Calu3 (cell line): ENCODE measurements at regions of chr1 and their contacts with region 1.

Region 1: DNA sequence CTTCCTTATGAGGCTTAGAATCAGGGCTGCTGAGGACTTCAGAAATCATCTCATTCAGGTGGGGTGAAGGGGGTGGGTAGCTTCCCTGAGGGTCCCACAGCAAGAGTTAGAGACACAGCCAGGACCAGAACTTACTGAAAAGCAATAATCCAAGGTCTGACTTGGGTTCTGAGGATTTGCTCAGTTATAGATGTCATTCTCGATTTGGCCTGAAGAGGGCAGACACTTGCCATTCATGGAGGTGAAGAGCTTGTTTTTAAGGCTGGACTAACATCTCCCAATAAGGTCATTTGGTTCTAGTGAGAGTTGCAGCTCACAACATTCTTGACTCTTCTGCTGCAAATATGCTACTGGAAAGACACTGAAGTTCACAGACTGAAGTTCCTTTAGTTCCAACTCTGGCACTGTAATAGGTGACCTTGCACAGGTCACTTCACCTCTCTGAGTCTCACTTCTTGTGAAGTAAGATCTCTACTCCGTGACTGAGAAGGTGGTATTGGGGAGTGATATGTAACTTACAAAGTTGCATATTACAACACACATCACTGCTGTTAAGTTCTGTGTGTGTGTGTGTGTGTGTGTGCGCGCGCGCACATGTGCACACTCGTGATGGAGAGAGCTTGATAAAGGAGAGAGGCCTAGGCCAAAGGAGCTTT is 69.8 kb upstream of the DIRAS3 start:
- DNase-seq: peak; percentile 66
- H3K4me3 Mint-ChIP-seq: no peak overlapping the region
- H3K27ac Mint-ChIP-seq: no peak overlapping the region
- H3K4me1 Mint-ChIP-seq: peaks cover 9% of the 10 kb centered on the region
- H3K27me3 Mint-ChIP-seq: no peaks in the 10 kb centered on the region
- CTCF ChIP-seq: peak; percentile 71

Region 2: GRCh38 chr1:68101829-68102228 is 18.4 kb before region 1 on chr1:
- CTCF ChIA-PET with region 1: no interaction called
- intact Hi-C with region 1: no loop called
- DNase-seq: no peak
- H3K4me3 Mint-ChIP-seq: no peak overlapping the region
- H3K27ac Mint-ChIP-seq: no peak overlapping the region
- H3K4me1 Mint-ChIP-seq: no peaks in the 10 kb centered on the region
- H3K27me3 Mint-ChIP-seq: no peaks in the 10 kb centered on the region
- CTCF ChIP-seq: no peak

Region 3: DNA sequence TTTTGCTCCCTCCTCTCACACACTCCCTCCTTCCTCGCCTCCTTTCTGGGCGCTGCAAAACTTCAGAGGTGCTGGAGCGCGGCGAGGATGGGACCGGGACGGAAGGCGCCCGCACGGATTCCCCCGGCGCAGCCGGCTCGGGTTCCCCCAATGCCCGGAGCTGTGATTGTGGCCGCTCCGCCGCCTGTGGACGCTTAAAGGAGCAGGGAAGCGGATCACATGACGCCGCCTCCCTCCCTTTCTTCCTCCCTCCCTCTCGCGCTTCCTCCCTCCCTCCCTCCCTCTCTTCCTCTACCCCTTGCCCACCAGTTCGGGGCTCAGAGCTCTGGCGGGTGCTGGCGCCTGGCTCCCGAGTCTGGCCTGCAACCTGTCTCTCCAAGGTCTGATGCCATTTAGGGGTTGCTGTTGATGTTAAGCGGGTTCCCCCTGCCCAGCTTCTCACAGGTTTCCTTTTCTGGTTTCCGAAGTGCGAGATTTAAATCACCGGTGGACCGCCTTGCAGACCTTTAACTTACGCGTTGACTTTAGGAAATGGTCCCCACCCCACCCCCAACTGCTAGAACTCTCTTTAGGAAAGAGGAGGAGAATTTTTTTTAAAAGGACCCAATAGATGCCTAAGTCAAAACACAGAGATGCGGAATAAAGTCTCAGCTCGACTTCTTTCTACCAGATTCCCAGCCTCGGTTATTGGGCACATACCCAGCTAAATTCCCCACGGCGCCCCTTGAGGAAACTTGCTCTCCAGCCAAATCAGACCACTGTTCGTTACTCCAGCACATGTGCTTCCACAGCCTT is 112.3 kb after region 1 on chr1 and contains the start of gene WLS:
- CTCF ChIA-PET with region 1: interaction called, 10 read pairs
- intact Hi-C with region 1: loop called (anchors 2 kb)
- DNase-seq: peak; percentile 65
- H3K4me3 Mint-ChIP-seq: peak within 1 kb of the TSS; percentile 96
- H3K27ac Mint-ChIP-seq: peak within 1 kb of the TSS; percentile 17
- H3K4me1 Mint-ChIP-seq: peaks cover 19% of the 10 kb centered on the region
- H3K27me3 Mint-ChIP-seq: no peaks in the 10 kb centered on the region
- CTCF ChIP-seq: no peak
- total RNA-seq, gene WLS: 50.9 and 57.3 TPM in 2 replicates

Region 4: DNA sequence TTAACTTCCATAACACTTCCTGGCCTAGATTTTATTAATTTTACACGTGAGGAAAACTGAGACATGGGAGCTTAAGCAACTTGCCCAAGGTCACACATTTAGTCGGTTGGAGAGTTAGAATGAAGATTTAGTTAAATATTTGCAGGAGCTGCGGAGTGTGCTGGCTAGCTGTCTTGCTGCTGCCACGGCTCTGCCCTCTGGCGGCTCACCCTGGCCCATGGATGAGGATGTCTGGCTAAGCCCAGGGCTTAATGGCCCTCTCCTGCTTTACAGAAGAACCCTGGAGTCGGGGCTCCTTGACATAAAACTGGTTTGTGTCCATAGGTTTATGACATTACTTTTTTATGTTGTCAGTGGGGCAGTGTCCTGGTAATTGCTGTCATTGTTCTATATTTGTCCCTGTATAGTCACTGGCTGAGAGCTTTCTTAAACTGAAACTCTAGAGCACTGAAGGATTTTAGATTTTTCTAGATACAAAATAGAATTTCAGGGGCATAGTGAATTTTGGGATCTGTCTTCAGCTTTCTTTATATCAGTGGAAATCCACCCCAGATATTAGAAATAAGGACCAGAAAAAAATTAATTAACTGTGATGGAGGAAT is 200.9 kb after region 1 on chr1:
- CTCF ChIA-PET with region 1: interaction called, 87 read pairs
- intact Hi-C with region 1: loop called (anchors 1 kb)
- DNase-seq: peak; percentile 84
- H3K4me3 Mint-ChIP-seq: no peak overlapping the region
- H3K27ac Mint-ChIP-seq: no peak overlapping the region
- H3K4me1 Mint-ChIP-seq: peaks cover 5% of the 10 kb centered on the region
- H3K27me3 Mint-ChIP-seq: no peaks in the 10 kb centered on the region
- CTCF ChIP-seq: peak; percentile 74

Region 5: GRCh38 chr1:68346188-68346808 is 226.0 kb after region 1 on chr1:
- CTCF ChIA-PET with region 1: interaction called, 12 read pairs
- intact Hi-C with region 1: loop called (anchors 1 kb)
- DNase-seq: no peak
- H3K4me3 Mint-ChIP-seq: no peak overlapping the region
- H3K27ac Mint-ChIP-seq: peak overlapping the region; percentile 30
- H3K4me1 Mint-ChIP-seq: peaks cover 12% of the 10 kb centered on the region
- H3K27me3 Mint-ChIP-seq: no peaks in the 10 kb centered on the region
- CTCF ChIP-seq: peak; percentile 25

Region 6: DNA sequence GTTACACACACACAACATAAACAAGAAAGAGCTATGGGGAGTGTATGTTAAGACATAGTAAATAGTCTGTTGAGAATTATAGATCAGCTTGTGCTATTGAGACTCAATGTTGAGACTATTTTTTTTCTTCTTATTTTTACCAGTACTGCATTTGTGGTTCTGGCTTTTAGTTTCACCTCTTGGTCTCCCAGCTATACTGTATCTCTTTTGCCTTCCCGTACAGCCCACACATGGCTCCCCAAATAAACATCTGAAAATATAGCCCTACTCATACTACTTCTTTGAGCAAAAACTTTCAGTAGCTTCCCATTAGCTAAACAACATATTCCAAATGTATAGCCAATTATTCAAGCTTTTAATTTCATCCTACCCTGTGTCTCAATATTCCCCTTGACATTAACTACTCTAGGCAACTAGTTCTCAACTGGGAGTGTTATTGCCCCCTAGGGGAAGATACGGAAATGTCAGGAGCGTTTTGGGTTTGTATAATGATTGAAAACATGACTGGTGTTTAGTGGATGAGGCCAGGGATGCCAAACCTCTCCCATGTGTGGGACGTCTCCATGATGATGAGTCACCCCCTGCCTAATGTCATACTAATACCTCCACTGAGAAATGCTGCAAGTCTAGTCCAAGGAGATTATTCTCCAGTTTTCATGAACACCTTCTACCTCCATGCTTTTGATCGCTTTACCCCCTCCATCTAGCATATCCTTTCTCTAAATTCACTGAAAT is 322.7 kb after region 1 on chr1:
- CTCF ChIA-PET with region 1: interaction called, 16 read pairs
- intact Hi-C with region 1: loop called (anchors 1 kb)
- DNase-seq: peak; percentile 67
- H3K4me3 Mint-ChIP-seq: no peak overlapping the region
- H3K27ac Mint-ChIP-seq: no peak overlapping the region
- H3K4me1 Mint-ChIP-seq: peaks cover 24% of the 10 kb centered on the region
- H3K27me3 Mint-ChIP-seq: no peaks in the 10 kb centered on the region
- CTCF ChIP-seq: peak; percentile 41

Region 7: DNA sequence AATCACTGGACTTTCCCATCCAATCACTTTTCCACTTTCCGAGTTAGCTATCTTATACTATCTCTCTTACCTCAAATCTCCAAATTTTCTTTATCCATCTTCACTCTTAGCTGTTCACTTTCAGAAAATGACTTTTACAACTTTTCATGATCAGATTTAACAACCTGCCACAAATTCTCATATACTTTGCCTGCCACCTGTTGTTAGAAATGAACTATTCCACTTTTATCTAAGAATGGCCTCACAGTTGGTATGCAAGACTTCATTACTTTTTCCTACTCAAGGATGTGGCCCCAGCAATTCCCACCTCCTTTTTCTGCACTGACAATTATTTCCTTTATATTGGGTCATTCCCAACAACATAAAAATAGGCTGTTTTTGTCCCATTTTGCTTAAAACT is 470.2 kb after region 1 on chr1:
- CTCF ChIA-PET with region 1: no interaction called
- intact Hi-C with region 1: loop called (anchors 2 kb)
- DNase-seq: no peak
- H3K4me3 Mint-ChIP-seq: no peak overlapping the region
- H3K27ac Mint-ChIP-seq: no peak overlapping the region
- H3K4me1 Mint-ChIP-seq: peaks cover 16% of the 10 kb centered on the region
- H3K27me3 Mint-ChIP-seq: no peaks in the 10 kb centered on the region
- CTCF ChIP-seq: no peak

Region 8: GRCh38 chr1:69737527-69738185 is 1617.4 kb after region 1 on chr1:
- CTCF ChIA-PET with region 1: no interaction called
- intact Hi-C with region 1: loop called (anchors 10 kb)
- DNase-seq: peak; percentile 49
- H3K4me3 Mint-ChIP-seq: no peak overlapping the region
- H3K27ac Mint-ChIP-seq: no peak overlapping the region
- H3K4me1 Mint-ChIP-seq: no peaks in the 10 kb centered on the region
- H3K27me3 Mint-ChIP-seq: no peaks in the 10 kb centered on the region
- CTCF ChIP-seq: peak; percentile 67